ENCODE measurements at regions of chr9 and their contacts with region 1.

Region 1: DNA sequence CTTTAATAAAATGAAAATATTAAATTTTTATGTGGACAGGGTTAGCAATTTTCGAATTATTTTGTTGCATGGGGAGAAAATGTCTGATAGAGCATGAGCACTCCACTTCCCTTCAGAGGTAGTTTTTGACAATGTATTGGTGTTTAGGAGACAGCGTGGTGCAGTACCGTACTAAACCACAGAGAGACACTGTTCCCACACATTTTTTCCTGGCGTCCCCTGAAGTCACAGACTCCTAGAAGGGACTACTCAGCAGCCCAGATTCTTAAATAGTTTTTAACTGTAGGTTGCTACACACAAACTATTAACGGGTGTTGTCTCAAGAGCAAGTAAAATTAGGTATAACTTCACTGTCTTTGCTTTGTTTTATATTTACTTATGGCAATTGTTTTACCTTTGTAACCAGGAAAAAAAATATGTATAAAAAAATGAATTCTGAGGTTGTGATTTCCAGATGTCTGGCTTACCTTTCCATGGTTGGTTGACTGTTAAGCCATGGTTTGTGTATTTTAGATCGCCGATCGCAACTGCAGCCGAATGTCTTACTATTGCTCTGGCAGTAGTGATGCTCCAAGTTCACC is 171.2 kb downstream of the DOCK8 start:
- DNase-seq: no peak
- ATAC-seq: peak; percentile 87
- H3K4me3 ChIP-seq: no peak overlapping the region
- H3K27ac ChIP-seq: no peak overlapping the region
- H3K4me1 ChIP-seq: no peaks in the 10 kb centered on the region
- H3K27me3 ChIP-seq: no peaks in the 10 kb centered on the region

Region 2: DNA sequence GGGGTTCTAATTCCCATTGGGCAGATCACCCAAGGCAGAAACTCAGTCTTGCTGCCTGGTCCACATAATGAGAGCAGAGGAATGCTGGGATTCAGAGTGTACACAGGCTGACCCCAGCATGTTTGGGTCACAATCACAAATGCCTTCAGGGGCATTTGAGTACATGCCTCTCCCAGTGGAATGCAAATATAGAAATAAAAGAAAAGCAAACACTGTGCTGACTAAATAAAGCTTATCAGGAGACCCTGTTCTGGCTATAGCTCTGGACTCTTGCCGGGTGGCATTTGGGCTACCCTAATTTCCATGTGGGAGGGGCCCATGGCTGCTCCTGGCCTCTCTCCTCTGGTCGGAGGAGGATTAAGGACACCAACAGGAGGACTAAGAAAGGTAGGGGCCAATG is 49.9 kb before region 1 on chr9:
- intact Hi-C with region 1: no loop called
- DNase-seq: no peak
- ATAC-seq: no peak
- H3K4me3 ChIP-seq: no peak overlapping the region
- H3K27ac ChIP-seq: no peak overlapping the region
- H3K4me1 ChIP-seq: peaks cover 0 to 2% of the 10 kb centered on the region in 2 donors
- H3K27me3 ChIP-seq: no peaks in the 10 kb centered on the region

Region 3: DNA sequence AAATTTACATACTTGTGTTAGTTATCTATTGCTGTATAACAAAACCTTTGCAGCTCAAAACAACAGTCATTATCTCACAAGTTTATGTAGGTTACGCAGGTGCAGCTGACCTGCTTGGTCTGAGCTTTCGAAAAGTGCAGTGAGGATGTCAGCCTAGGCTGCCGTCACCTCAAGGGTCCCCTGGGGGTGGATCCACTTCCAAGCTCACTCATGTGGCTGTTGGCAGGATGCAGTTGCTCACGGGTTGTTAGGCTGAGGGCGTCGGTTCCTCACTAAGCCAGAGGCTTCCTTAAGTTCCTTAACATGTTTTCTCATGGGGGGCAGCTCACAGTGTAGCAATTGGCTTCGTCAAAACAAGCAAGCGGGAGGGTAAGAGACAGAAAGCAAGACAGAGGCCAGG is 31.5 kb before region 1 on chr9:
- intact Hi-C with region 1: no loop called
- DNase-seq: no peak
- ATAC-seq: no peak
- H3K4me3 ChIP-seq: no peak overlapping the region
- H3K27ac ChIP-seq: no peak overlapping the region
- H3K4me1 ChIP-seq: peaks cover 0 to 1% of the 10 kb centered on the region in 2 donors
- H3K27me3 ChIP-seq: no peaks in the 10 kb centered on the region

Region 4: DNA sequence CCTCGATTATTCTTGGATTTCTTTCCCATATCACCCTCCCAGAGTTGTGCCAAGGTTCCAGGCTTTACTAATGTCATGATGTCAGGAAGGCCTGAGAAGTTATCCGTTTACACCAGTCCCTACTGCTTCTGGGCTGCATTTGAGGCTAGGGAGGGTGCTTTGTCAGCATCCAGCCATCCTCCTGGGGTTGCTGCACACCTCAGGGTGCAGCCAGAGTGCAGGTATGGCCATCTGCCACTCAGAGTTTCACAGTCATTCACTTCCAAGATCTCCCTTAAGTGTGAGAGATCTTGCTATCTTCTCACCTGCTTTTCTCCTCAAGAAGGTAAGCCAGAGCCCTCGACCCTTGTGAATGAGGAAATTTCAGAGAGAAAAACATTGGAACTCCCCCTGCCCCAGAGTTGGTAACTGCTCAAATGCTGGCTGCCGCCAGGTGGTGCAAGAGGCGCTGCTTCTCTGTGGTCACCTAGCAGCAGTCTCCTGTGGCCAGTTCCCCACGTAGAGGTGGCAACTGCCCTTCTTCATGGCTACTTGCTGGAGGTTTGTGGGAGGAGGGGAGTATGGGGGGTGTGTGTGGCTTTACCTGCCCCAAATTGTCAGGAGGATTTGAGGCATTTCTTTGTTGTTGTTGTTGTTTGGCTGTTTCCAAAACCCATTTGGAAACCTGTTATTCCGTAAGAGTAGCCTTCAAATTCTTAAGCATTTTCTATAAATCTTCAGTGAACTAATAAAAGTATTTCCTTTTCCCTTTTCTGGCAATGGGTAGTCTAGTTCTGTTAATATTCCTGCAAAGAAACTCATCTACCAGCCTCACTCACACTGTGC is 196.0 kb after region 1 on chr9:
- intact Hi-C with region 1: loop called in 1 of 2 experiments (anchors 10 kb)
- DNase-seq: no peak
- ATAC-seq: no peak
- H3K4me3 ChIP-seq: no peak overlapping the region
- H3K27ac ChIP-seq: no peak overlapping the region
- H3K4me1 ChIP-seq: peaks cover 0 to 2% of the 10 kb centered on the region in 2 donors
- H3K27me3 ChIP-seq: no peaks in the 10 kb centered on the region

Region 5: DNA sequence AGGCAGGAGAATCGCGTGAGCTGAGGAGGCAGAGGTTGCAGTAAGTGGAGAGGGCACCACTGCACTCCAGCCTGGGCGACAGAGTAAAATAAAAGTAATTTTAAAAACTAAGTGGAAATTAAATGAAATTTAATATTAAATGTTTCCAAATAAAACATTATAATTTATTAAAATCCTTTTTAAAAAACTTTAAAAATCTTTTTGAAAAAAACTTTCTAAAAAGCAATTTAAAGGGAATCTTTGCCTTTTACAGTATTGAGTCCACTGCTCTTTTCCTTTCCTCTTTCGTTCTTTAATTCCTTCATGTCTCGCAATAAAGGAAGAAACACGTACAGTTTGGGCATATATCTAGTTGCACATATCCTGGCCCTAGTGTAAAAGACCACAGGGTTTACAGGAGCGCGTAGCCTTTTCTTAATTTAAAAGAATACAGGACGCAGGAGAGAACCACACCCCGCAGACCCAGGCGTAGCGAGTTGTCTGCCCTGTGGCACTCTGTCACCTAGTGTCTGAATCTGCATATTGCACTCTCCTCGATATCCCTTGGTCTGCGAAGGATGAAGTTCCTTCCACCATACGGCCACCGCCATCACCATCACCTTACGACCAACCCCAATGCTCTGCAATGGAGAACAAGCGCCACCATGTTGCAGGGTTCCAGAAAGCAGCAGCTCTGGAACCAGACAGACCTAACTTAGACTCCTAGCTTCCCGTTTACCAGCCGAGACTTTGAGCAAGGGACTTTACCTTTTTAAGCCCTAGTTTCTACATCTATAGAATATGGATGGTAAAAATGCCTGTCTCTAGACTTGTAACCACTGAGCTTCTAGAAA is 378.0 kb after region 1 on chr9:
- intact Hi-C with region 1: loop called in 1 of 2 experiments (anchors 10 kb)
- DNase-seq: peak; percentile 77 to 80
- ATAC-seq: peak; percentile 95
- H3K4me3 ChIP-seq: no peak overlapping the region
- H3K27ac ChIP-seq: no peak overlapping the region
- H3K4me1 ChIP-seq: peaks cover 0 to 2% of the 10 kb centered on the region in 2 donors
- H3K27me3 ChIP-seq: no peaks in the 10 kb centered on the region

Region 6: GRCh38 chr9:806285-807156 is 420.6 kb after region 1 on chr9:
- intact Hi-C with region 1: loop called (anchors 2 kb)
- DNase-seq: no peak
- ATAC-seq: no peak
- H3K4me3 ChIP-seq: no peak overlapping the region
- H3K27ac ChIP-seq: no peak overlapping the region
- H3K4me1 ChIP-seq: no peaks in the 10 kb centered on the region
- H3K27me3 ChIP-seq: no peaks in the 10 kb centered on the region

Region 7: GRCh38 chr9:1009101-1009707 is 623.3 kb after region 1 on chr9:
- intact Hi-C with region 1: loop called (anchors 10 kb)
- DNase-seq: peak; percentile 82 to 93
- ATAC-seq: peak; percentile 91
- H3K4me3 ChIP-seq: no peak overlapping the region
- H3K27ac ChIP-seq: no peak overlapping the region
- H3K4me1 ChIP-seq: no peaks in the 10 kb centered on the region
- H3K27me3 ChIP-seq: no peaks in the 10 kb centered on the region

Measured in aorta (tissue), 5 donors.